ENCODE measurements at regions of chr11 and their contacts with region 1.

Region 1: DNA sequence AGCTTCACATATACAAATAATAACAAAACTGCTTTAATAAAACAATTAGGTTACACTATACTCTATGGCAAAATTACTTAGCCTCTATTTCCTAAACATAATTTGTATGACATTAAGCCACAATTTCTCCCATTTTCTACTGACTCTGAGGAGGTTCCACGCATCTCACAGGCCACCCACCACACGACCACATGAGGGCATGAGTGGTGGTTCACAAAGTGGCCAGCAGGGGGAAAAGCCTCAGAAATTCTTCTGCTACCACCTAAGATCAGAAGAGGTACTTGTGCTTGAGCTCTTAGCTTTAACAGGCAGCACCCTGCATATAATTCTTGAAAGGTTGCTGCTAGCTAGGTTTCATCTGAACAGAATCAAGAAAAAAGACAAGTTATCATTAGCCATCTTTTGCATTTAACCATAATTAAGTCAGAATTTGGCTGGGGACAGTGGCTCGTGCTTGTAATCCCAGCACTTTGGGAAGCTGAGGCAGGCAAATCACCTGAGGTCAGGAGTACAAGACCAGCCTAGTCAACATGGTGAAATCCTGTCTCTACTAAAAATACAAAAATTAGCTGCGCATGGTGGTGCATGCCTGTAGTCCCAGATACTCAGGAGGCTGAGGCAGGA is 7.7 kb downstream of the LPXN start:
- DNase-seq: peak; percentile 85
- ATAC-seq: peak; percentile 95
- H3K4me3 Mint-ChIP-seq: peak overlapping the region; percentile 37
- H3K27ac Mint-ChIP-seq: peak overlapping the region; percentile 74
- H3K4me1 Mint-ChIP-seq: peaks cover 66% of the 10 kb centered on the region
- H3K27me3 Mint-ChIP-seq: no peaks in the 10 kb centered on the region

Region 2: DNA sequence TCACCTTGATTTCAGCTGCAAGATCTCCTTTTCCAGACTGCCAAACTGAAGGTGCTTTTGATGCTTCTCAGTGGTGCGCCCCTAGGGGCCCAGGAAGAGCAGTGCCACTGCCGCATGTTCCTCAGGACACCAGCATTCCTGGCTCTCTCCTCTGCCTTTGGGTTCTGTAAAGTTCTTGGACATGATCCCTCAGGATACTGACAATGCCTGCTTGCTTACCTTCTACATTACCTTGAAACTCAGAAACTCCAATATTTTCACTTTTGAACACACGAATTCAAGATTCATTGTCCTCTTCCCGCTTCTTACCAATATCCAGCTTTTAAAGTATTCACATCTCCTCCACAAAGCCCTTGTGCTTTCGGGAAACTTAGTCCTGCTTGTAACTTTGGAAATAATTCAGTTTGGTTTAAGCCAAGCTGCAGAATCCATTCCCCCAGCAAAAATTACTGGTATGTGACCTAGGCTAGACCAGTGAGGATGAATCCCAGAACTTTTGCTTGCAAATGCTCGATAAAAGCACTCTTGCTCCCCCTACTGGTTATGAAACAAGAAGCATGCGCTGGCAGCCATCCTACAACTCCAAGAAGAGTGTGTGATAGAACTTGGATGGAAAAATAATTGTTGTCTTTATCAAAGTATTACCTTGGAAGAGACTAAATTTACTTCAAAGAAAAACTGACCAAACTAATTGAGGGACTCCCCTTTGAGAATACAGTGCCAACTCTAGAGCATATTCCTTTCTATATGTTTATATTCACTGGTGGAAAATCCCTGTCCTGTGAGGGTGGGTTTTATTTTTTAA is 43.6 kb before region 1 on chr11:
- CTCF ChIA-PET with region 1: interaction called, 29 read pairs
- POLR2A ChIA-PET with region 1: interaction called, 5 read pairs
- DNase-seq: peak; percentile 65
- ATAC-seq: peak; percentile 66
- H3K4me3 Mint-ChIP-seq: peak overlapping the region; percentile 60
- H3K27ac Mint-ChIP-seq: peak overlapping the region; percentile 88
- H3K4me1 Mint-ChIP-seq: peaks cover 52% of the 10 kb centered on the region
- H3K27me3 Mint-ChIP-seq: no peaks in the 10 kb centered on the region

Region 3: GRCh38 chr11:58579192-58580129 is 11.5 kb after region 1 on chr11:
- CTCF ChIA-PET with region 1: interaction called, 100 read pairs
- POLR2A ChIA-PET with region 1: interaction called, 23 read pairs
- DNase-seq: peak; percentile 94
- ATAC-seq: peak; percentile 53
- H3K4me3 Mint-ChIP-seq: peak overlapping the region; percentile 85
- H3K27ac Mint-ChIP-seq: peak overlapping the region; percentile 100
- H3K4me1 Mint-ChIP-seq: peaks cover 47% of the 10 kb centered on the region
- H3K27me3 Mint-ChIP-seq: no peaks in the 10 kb centered on the region

Region 4: GRCh38 chr11:58609723-58610122 is 41.7 kb after region 1 on chr11:
- CTCF ChIA-PET with region 1: interaction called, 12 read pairs
- POLR2A ChIA-PET with region 1: no interaction called
- DNase-seq: no peak
- ATAC-seq: no peak
- H3K4me3 Mint-ChIP-seq: no peak overlapping the region
- H3K27ac Mint-ChIP-seq: no peak overlapping the region
- H3K4me1 Mint-ChIP-seq: peaks cover 33% of the 10 kb centered on the region
- H3K27me3 Mint-ChIP-seq: no peaks in the 10 kb centered on the region

Region 5: DNA sequence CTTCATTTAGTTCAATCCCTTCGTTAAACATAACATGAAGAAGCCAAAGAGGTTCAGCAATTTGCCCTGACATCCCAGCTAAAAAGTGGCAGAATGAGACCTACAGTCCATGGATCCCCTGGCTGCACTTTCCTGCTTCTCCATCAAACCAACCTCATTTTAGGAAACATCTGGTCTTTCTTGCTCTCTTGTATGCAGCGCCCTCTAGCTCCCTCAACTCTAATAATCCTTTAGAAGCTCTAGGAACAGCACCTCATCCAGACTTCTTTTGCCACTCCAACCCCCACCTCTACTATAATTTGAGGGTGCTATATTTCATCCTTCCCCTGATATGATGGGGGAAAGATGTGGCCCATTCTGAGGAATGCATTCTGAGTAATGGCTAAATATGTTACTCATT is 61.9 kb after region 1 on chr11:
- CTCF ChIA-PET with region 1: interaction called, 53 read pairs
- POLR2A ChIA-PET with region 1: interaction called, 3 read pairs
- DNase-seq: peak; percentile 27
- ATAC-seq: peak; percentile 55
- H3K4me3 Mint-ChIP-seq: no peak overlapping the region
- H3K27ac Mint-ChIP-seq: no peak overlapping the region
- H3K4me1 Mint-ChIP-seq: no peaks in the 10 kb centered on the region
- H3K27me3 Mint-ChIP-seq: no peaks in the 10 kb centered on the region